Cardiac septum (tissue), 1 donor: ENCODE measurements at regions of chr17 and their contacts with region 1.

Region 1: GRCh38 chr17:75855310-75856081 is at the start of gene WBP2:
- DNase-seq: peak; percentile 98
- total RNA-seq, gene WBP2: 129 TPM

Region 2: DNA sequence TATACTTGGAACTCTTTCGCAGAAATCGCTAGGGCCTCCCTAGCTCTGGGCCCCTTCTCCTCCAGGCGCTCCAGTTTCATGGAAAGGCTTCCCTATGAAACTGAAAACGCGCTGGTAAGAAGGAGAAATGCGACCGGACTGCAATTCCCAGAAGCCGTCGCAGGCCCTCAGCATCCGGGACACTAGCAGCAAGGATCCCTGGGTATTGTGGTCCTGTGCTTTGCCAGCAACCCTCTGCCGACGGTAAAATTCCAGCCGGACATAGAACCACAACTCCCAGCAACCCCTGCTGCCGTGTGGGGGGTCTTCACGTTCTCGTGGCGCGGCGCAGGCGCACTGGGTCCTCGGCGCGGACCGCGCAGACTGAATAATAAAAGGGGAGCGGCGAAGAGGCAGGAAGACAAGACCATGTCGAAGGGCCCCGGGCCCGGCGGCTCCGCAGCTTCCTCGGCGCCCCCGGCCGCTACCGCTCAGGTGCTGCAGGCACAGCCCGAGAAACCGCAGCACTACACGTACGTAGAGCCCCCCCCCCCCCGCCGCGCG is 71.0 kb before region 1 on chr17 and contains the start of gene UNK:
- intact Hi-C with region 1: loop called (anchors 2 kb)
- DNase-seq: peak; percentile 99
- total RNA-seq, gene UNK: 16.8 TPM

Region 3: GRCh38 chr17:75896415-75897159 is 41.1 kb after region 1 on chr17 and contains the start of gene TRIM65:
- intact Hi-C with region 1: loop called (anchors 2 kb)
- DNase-seq: peak; percentile 92
- total RNA-seq, gene TRIM65: 12.1 TPM